A549 (cell line): ENCODE measurements at regions of chr18 and their contacts with region 1.

Region 1: DNA sequence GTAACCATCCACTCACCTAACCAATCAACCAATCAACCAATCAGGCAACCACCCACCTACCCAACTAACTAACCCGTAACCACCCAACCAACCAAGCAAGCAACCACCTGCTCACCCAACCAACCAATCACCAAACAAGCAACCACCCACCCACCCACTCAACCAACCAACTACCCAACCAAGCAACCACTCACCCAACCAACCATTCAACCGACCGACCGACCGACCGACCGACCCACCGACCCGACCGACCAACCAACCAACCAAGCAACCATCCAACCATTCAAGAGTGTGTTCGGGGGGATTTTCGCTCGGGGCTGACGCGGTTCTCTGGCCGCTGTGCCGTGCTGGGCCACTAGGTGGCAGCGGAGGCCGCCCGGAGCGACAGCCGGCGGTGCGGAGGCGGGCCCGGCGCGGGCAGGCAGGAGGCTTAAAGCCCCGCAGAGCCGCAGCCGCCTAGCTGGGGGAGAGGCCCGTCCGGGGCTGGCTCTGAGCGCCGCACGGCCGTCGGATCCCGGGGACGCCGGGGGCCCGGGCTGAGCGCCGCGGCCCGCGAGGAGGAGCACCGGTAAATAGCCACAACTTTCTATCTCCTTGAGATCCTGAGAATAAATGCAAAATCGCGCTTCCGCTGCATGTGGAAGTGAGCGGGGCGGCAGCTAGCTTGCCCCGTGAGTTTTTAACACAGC is at the start of gene MC5R:
- DNase-seq: peak; percentile 21 to 33
- ATAC-seq: peak; percentile 87 to 96
- H3K4me3 ChIP-seq: peak within 1 kb of the TSS; percentile 38
- H3K27ac ChIP-seq: no peak within 1 kb of the TSS
- H3K4me1 ChIP-seq: no peaks in the 10 kb centered on the region
- CTCF ChIP-seq: peak; percentile 57
- EP300 ChIP-seq: no peak
- POLR2A ChIP-seq: no peak
- RAD21 ChIP-seq: peak; percentile 56 to 81
- polyA plus RNA-seq, gene MC5R: not detected in 2 replicates

Region 2: GRCh38 chr18:13566941-13567746 is 256.7 kb before region 1 on chr18:
- CTCF ChIA-PET with region 1: no interaction called
- POLR2A ChIA-PET with region 1: no interaction called
- DNase-seq: no peak
- ATAC-seq: no peak
- H3K4me3 ChIP-seq: no peak overlapping the region
- H3K27ac ChIP-seq: no peak overlapping the region
- H3K4me1 ChIP-seq: no peaks in the 10 kb centered on the region; the same call in 2 of the 3 replicates
- CTCF ChIP-seq: no peak
- EP300 ChIP-seq: no peak
- POLR2A ChIP-seq: no peak
- RAD21 ChIP-seq: no peak

Region 3: DNA sequence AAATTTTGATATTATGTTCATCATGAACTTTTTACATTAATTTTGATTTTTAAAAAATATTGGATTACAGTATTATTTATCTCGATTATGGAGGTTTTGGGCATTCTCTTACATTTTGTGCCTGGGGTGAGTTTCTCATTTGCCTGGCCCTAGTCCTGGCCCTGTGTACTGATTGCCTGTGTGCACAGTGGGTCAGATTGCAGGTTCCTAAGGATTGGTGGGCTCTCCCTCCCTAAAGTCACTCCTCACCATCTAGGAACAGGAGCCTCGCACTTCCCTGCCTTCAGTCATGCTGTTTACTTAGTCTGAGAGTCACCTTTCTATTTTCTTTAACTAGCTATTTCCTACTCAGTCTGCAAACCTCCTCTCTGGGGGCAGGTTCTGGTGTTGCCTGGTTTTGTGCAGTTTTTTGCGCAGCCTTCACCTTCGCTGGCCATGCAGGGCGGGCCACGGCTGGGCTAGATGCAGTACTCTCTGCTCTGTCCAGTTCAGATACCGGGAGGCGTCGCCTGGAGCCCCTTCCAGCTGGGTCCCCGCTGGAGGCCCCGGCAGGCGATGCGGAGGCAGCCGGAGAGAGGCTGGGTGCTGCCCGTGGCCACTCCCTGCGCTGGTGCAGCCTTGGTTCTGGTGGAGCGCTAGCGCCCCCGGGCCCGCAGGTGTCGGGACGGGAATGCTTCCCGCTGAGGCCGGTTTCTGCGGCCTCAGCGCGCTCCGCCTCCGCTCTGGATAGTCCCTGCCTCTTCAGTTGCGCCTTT is 23.2 kb before region 1 on chr18:
- CTCF ChIA-PET with region 1: no interaction called
- POLR2A ChIA-PET with region 1: no interaction called
- DNase-seq: peak; percentile 58 to 73
- ATAC-seq: peak; percentile 100
- H3K4me3 ChIP-seq: peak overlapping the region; percentile 39
- H3K27ac ChIP-seq: peak overlapping the region in 1 of 2 experiments; percentile 66; a peak in 2 of 6 replicates
- H3K4me1 ChIP-seq: peaks cover 6% of the 10 kb centered on the region; the same call in 1 of the 3 replicates
- CTCF ChIP-seq: peak; percentile 63
- EP300 ChIP-seq: no peak
- POLR2A ChIP-seq: peak; percentile 17; the same call in 1 of the 2 replicates
- RAD21 ChIP-seq: peak; percentile 54 to 80

Region 4: GRCh38 chr18:13813271-13813849 is 10.5 kb before region 1 on chr18:
- CTCF ChIA-PET with region 1: interaction called, 10 read pairs
- POLR2A ChIA-PET with region 1: no interaction called
- DNase-seq: peak; percentile 41 to 53
- ATAC-seq: peak; percentile 70 to 90; a peak in 3 of 6 replicates
- H3K4me3 ChIP-seq: no peak overlapping the region
- H3K27ac ChIP-seq: no peak overlapping the region
- H3K4me1 ChIP-seq: no peaks in the 10 kb centered on the region
- CTCF ChIP-seq: peak; percentile 43; the same call in 2 of the 3 replicates
- EP300 ChIP-seq: no peak
- POLR2A ChIP-seq: no peak
- RAD21 ChIP-seq: peak; percentile 51 to 57; a peak in 4 of 5 replicates

Region 5: GRCh38 chr18:13934676-13935075 is 110.8 kb after region 1 on chr18:
- CTCF ChIA-PET with region 1: no interaction called
- POLR2A ChIA-PET with region 1: no interaction called
- DNase-seq: no peak
- ATAC-seq: no peak
- H3K4me3 ChIP-seq: no peak overlapping the region
- H3K27ac ChIP-seq: no peak overlapping the region
- H3K4me1 ChIP-seq: no peaks in the 10 kb centered on the region
- CTCF ChIP-seq: no peak
- EP300 ChIP-seq: no peak
- POLR2A ChIP-seq: no peak
- RAD21 ChIP-seq: no peak